Breast epithelium (tissue), 4 donors: ENCODE measurements at regions of chr9 and their contacts with region 1.

Region 1: GRCh38 chr9:127411122-127411521 is 13.1 kb upstream of the ZNF79 start:
- DNase-seq: no peak
- H3K4me3 ChIP-seq: no peak overlapping the region
- H3K27ac ChIP-seq: no peak overlapping the region
- H3K4me1 ChIP-seq: no peaks in the 10 kb centered on the region
- H3K27me3 ChIP-seq: no peaks in the 10 kb centered on the region
- CTCF ChIP-seq: no peak
- POLR2A ChIP-seq: no peak

Region 2: DNA sequence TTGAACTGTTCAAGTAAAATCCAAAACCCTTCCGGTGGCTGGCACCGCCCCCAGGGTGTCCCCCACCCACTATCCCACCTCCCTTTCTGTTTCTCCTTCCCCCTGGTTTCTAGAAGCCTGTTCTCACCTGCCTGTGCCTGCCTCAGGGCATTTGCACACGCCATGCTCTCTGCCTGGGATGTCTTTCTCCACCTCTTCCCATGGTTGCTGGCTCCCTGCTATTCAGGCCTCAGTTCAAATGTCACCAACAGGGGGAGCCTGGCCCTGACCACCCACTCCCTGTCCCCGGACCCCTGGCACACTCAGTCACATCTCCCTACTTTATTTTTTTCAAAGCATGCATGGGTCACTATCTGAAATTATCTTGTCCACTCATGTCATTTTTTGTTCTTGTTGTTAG is 609.6 kb after region 1 on chr9:
- intact Hi-C with region 1: loop called (anchors 5 kb)
- DNase-seq: no peak
- H3K4me3 ChIP-seq: no peak overlapping the region
- H3K27ac ChIP-seq: no peak overlapping the region
- H3K4me1 ChIP-seq: no peaks in the 10 kb centered on the region
- H3K27me3 ChIP-seq: no peaks in the 10 kb centered on the region
- CTCF ChIP-seq: no peak
- POLR2A ChIP-seq: no peak